Aorta (tissue), 5 donors: ENCODE measurements at regions of chr2 and their contacts with region 1.

Region 1: DNA sequence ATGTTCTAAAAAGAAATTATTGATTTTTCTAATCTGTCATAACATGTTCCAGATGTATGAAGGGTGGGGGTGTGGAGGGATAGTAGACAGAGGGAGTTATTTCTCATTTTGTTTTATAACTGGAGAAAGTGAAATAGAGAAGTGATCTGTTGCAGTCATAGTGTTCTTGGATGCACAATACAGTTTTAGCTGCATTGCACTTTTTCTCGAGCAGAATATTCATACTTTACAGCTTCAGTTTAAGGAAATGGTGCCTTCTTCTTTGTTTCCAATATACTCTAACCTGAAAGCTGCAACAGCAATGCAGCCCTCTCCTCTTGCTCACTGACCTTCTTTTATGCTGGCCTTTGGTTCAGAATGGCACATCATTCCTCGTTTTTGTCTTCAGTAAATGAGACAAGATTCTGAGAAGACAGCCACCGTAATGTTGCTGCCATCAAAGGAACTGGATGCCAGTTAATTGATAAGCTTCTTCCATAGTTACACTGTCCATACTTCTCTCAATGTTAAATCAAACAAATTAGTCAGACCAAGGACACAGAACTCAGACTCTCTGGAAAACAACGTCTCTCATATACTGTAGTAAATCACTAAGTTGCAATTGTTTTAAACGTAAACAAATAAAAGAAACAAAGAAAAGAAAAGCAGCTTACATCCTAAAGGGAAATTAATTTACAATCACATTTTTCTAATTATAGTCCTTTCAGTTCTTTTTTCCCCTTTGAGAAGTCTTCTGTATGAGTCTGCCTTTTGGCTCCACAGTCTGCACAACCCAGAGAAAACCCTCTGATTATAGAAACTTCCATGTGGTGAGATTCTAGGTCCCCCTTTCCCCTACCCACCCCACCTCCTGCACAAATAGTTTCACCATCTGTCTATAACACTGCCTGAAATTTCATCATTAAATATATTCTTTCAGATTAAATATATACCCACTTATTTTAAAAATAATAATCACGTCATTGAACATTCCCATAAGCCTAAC is 97.4 kb upstream of the UGP2 start:
- DNase-seq: no peak
- ATAC-seq: no peak
- H3K4me3 ChIP-seq: no peak overlapping the region
- H3K27ac ChIP-seq: no peak overlapping the region
- H3K4me1 ChIP-seq: peaks cover 0 to 1% of the 10 kb centered on the region in 2 donors
- H3K27me3 ChIP-seq: no peaks in the 10 kb centered on the region

Region 2: GRCh38 chr2:63544017-63544627 is 200.2 kb before region 1 on chr2:
- intact Hi-C with region 1: no loop called
- DNase-seq: no peak
- ATAC-seq: no peak
- H3K4me3 ChIP-seq: no peak overlapping the region
- H3K27ac ChIP-seq: no peak overlapping the region
- H3K4me1 ChIP-seq: no peaks in the 10 kb centered on the region
- H3K27me3 ChIP-seq: no peaks in the 10 kb centered on the region

Region 3: DNA sequence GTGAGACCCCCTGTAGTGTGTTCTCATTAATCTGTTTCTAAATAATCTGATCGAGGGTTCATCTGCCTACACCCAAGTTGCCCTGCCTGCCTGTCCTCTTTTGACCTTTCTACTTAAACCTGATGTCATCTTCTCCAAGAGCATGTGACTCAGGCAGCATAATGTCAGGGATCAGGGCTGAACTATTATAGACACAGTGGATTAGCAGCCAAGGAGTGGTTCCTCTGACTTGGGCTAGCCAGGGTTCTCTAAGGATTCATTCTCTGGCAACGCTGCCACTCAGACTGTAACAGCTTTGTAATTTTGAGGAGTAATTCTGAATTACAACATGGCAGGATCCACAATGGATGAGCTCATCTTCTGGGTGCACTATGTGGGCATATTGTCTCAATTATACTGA is 31.5 kb before region 1 on chr2:
- intact Hi-C with region 1: loop called in 1 of 2 experiments (anchors 1 kb)
- DNase-seq: no peak
- ATAC-seq: no peak
- H3K4me3 ChIP-seq: no peak overlapping the region
- H3K27ac ChIP-seq: no peak overlapping the region
- H3K4me1 ChIP-seq: no peaks in the 10 kb centered on the region
- H3K27me3 ChIP-seq: no peaks in the 10 kb centered on the region